ENCODE measurements at regions of chr7 and their contacts with region 1.

Region 1: DNA sequence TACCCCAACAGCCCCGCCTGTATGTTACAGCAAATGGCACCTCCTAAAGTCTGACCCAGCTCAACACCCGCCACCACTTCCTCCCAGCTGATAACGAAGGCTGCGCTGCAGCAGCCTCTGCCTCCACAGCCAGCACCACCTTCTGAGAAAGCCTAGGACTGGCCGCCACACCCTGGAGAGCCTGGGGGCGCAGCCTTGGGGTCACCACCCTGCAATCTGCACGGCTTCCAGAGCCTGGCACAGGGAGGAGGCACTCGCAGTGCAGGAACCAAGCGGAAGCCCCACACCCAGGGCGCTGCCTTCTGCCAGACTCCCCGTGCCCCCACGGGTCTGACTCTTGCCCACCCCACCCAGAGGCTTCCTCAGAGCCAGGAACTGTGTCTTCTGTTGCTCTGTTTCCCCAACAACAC is 112.5 kb downstream of the MAD1L1 start:
- DNase-seq: peak; percentile 43 to 80 (median 60)
- H3K4me3 ChIP-seq: no peak overlapping the region
- H3K4me3 Mint-ChIP-seq: peak overlapping the region; percentile 7 to 83 (median 76)
- H3K27ac ChIP-seq: no peak overlapping the region
- H3K27ac Mint-ChIP-seq: peak overlapping the region; percentile 70 to 95 (median 92)
- H3K4me1 ChIP-seq: peaks cover 24% of the 10 kb centered on the region
- H3K4me1 Mint-ChIP-seq: peaks cover 23 to 37% (median 24%) of the 10 kb centered on the region in 3 donors
- H3K27me3 ChIP-seq: no peaks in the 10 kb centered on the region
- H3K27me3 Mint-ChIP-seq: peaks cover 0 to 2% of the 10 kb centered on the region in 2 donors

Region 2: DNA sequence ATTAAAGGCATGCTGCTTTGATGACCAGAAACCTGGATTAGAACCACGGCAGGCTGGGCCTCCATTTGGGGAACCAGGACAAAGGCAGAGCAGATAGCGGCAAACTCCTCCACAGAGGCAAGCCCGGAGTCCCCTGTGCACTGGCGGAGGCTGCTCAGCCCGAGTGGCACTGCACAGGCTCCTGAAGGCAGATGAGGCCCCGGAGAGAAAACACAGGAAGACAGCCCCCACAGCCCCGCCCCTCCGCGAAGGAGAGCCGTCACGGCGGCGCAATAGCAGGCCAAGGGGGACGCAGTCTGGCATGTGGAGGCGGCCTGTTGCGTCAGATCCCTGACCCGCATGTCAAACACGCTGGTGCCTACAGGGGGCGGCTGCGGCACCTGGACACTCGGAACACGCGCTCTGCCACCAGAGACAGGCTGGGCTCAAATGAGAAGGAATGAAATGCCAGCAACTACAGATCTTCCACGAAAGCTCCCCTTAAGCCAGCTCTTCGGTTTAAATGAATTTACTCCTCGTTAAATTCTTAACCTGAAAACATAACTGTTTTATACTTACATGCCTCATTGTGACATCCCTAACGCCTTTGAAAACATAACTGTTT is 16.0 kb before region 1 on chr7:
- CTCF ChIA-PET with region 1: interaction called, 12 read pairs
- POLR2A ChIA-PET with region 1: no interaction called
- DNase-seq: peak; percentile 51 to 89 (median 67)
- H3K4me3 ChIP-seq: peak overlapping the region; percentile 39
- H3K4me3 Mint-ChIP-seq: peak overlapping the region in 4 of 7 donors; percentile 32 to 78 (median 46)
- H3K27ac ChIP-seq: peak overlapping the region; percentile 40
- H3K27ac Mint-ChIP-seq: peak overlapping the region in 7 of 8 donors; percentile 29 to 85 (median 54)
- H3K4me1 ChIP-seq: peaks cover 31% of the 10 kb centered on the region
- H3K4me1 Mint-ChIP-seq: peaks cover 26 to 40% (median 34%) of the 10 kb centered on the region in 3 donors
- H3K27me3 ChIP-seq: no peaks in the 10 kb centered on the region
- H3K27me3 Mint-ChIP-seq: peaks cover 0 to 8% of the 10 kb centered on the region in 2 donors

Region 3: GRCh38 chr7:2134776-2135391 is 14.6 kb after region 1 on chr7:
- CTCF ChIA-PET with region 1: no interaction called
- POLR2A ChIA-PET with region 1: no interaction called
- DNase-seq: no peak
- H3K4me3 ChIP-seq: no peak overlapping the region
- H3K4me3 Mint-ChIP-seq: no peak overlapping the region
- H3K27ac ChIP-seq: no peak overlapping the region
- H3K27ac Mint-ChIP-seq: peak overlapping the region in 1 of 8 donors; percentile 32
- H3K4me1 ChIP-seq: peaks cover 11% of the 10 kb centered on the region
- H3K4me1 Mint-ChIP-seq: peaks cover 9 to 13% (median 11%) of the 10 kb centered on the region in 3 donors
- H3K27me3 ChIP-seq: no peaks in the 10 kb centered on the region
- H3K27me3 Mint-ChIP-seq: no peaks in the 10 kb centered on the region

Region 4: DNA sequence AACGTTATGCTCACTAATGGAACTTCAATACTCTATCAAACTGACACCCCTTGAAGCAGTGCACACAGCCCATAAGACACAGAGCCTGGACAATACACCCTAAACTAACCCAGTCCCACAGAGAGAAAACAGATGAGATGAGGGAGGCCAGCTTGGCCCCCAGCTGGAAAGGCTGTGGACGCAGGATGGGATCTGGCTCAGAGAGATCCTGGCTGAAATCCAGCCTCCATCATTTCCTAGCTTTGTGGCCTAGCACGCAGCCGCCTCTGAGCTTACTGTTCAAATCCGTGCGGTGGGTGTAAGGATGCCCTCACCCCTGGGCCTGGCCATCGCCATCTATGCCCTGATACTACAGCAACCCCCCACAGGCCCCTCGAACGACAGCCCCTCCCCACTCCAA is 161.3 kb after region 1 on chr7:
- CTCF ChIA-PET with region 1: no interaction called
- POLR2A ChIA-PET with region 1: no interaction called
- DNase-seq: no peak
- H3K4me3 ChIP-seq: no peak overlapping the region
- H3K4me3 Mint-ChIP-seq: no peak overlapping the region
- H3K27ac ChIP-seq: no peak overlapping the region
- H3K27ac Mint-ChIP-seq: no peak overlapping the region
- H3K4me1 ChIP-seq: no peaks in the 10 kb centered on the region
- H3K4me1 Mint-ChIP-seq: peaks cover 0 to 5% (median 0%) of the 10 kb centered on the region in 3 donors
- H3K27me3 ChIP-seq: no peaks in the 10 kb centered on the region
- H3K27me3 Mint-ChIP-seq: no peaks in the 10 kb centered on the region

Region 5: DNA sequence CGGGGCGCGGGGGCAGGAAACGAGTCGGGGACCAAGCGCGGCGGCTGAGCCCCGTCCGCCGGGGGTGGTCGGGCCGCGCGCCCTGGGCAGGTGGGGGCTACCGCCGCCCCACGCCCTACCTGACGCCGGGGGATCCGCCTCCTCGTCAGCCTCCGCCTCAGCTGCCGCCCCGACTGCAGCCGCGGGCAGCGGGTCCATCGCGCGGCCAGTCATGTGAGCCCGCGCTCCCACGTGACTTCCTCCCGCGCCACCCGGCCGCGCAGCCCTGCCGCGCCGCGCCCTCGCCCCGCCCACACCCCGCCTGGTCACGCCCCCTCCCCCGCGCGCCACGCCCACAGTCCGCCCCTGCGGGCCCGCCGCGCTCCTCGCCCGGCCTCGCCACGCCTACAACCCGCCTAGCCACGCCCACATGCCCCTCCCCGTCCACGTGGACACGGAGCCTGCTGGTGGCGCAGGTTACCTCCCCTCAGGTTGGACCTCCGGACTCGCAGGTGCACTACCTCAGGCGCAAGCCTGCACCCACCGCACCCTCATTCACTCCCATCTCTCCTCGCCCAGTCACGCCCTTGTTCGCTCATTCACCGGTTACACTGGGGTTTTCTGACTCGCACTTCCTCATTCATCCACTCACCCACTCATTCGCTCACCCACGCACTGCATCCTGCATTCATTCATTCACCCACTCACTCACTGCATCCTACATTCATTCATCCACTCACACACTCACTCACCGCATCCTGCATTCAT is 194.1 kb after region 1 on chr7 and contains the start of gene SNX8:
- CTCF ChIA-PET with region 1: no interaction called
- POLR2A ChIA-PET with region 1: no interaction called
- DNase-seq: peak; percentile 91 to 96 (median 95)
- H3K4me3 ChIP-seq: peak within 1 kb of the TSS; percentile 67
- H3K4me3 Mint-ChIP-seq: peak within 1 kb of the TSS in 6 of 7 donors; percentile 85 to 93 (median 92)
- H3K27ac ChIP-seq: peak within 1 kb of the TSS; percentile 73
- H3K27ac Mint-ChIP-seq: peak within 1 kb of the TSS in 7 of 8 donors; percentile 70 to 93 (median 88)
- H3K4me1 ChIP-seq: peaks cover 4% of the 10 kb centered on the region
- H3K4me1 Mint-ChIP-seq: peaks cover 9 to 15% (median 14%) of the 10 kb centered on the region in 3 donors
- H3K27me3 ChIP-seq: no peaks in the 10 kb centered on the region
- H3K27me3 Mint-ChIP-seq: no peaks in the 10 kb centered on the region
- total RNA-seq, gene SNX8: 40.3 to 42.3 TPM

Measured in CD8-positive, alpha-beta memory T cell (primary cell).